Calu3 (cell line): ENCODE measurements at regions of chr12 and their contacts with region 1.

Region 1: DNA sequence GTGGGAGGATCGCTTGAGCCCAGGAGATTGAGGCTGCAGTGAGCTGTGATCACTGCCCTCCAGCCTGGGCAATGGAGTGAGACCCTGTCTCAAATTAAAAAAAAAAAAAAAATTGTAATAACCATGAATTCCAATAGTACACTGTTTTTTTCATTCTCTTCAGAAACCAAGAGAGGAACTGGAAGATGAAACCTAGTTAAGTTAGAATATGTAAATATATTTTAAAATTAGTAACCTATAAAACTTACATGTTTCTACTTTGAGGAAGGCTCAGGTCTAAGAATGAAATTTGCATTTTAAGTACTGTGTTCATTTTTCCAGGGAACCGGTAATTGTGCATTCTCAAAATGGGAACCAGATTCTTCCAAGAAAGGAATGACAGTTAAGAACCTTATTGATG is 18.8 kb downstream of the KNTC1 start:
- DNase-seq: no peak
- H3K4me3 Mint-ChIP-seq: no peak overlapping the region
- H3K27ac Mint-ChIP-seq: no peak overlapping the region
- H3K4me1 Mint-ChIP-seq: no peaks in the 10 kb centered on the region
- H3K27me3 Mint-ChIP-seq: no peaks in the 10 kb centered on the region
- CTCF ChIP-seq: no peak

Region 2: DNA sequence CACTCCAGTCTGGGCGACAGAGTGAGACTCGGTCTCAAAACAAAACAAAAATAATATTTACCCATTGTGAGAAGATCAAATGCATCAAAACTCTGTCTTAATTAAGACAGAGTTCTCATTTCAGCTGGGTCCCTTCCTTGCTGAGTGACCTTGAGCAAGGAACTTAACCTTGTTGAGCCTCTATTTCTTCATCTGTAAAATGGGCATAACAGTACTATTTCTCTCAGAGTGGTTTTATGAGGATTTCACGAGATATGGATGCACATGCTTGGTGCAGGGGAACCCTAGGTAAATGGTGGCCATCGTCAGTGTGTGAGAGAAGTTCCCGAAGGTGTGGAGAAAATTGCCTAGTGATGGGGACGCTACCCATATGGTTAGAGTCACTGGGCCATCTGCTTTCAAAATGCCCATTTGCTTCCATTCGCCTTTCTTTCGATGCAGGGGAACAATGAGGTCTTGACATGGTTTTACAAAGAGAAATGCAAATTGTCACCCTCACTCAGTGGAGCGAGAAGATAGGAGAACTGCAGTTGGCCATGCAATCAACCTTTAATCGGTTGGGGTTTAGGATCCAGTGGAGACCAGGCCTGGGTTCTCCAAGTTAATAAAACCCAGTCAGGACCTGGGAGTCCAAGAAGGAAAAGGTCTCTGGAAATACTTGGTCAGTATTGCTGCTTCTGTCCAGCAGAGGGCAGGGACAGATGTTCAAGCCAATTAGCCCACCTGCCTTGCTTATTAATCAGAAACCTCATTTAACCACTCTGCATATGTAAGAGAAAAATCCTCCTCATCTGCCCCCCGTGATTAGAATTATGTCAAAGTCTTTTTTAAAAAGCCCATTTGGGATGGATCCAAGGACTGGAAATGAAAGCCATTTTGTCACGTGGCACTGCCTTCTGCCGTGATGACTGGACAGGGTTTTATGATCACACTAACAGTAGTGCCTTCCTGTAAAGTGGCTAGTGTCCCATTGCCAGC is 590.3 kb before region 1 on chr12:
- CTCF ChIA-PET with region 1: no interaction called
- intact Hi-C with region 1: no loop called
- DNase-seq: peak; percentile 18
- H3K4me3 Mint-ChIP-seq: no peak overlapping the region
- H3K27ac Mint-ChIP-seq: no peak overlapping the region
- H3K4me1 Mint-ChIP-seq: no peaks in the 10 kb centered on the region
- H3K27me3 Mint-ChIP-seq: no peaks in the 10 kb centered on the region
- CTCF ChIP-seq: peak; percentile 74

Region 3: GRCh38 chr12:122437656-122438121 is 108.2 kb before region 1 on chr12:
- CTCF ChIA-PET with region 1: interaction called, 12 read pairs
- intact Hi-C with region 1: no loop called
- DNase-seq: no peak
- H3K4me3 Mint-ChIP-seq: no peak overlapping the region
- H3K27ac Mint-ChIP-seq: no peak overlapping the region
- H3K4me1 Mint-ChIP-seq: peaks cover 10% of the 10 kb centered on the region
- H3K27me3 Mint-ChIP-seq: no peaks in the 10 kb centered on the region
- CTCF ChIP-seq: no peak

Region 4: DNA sequence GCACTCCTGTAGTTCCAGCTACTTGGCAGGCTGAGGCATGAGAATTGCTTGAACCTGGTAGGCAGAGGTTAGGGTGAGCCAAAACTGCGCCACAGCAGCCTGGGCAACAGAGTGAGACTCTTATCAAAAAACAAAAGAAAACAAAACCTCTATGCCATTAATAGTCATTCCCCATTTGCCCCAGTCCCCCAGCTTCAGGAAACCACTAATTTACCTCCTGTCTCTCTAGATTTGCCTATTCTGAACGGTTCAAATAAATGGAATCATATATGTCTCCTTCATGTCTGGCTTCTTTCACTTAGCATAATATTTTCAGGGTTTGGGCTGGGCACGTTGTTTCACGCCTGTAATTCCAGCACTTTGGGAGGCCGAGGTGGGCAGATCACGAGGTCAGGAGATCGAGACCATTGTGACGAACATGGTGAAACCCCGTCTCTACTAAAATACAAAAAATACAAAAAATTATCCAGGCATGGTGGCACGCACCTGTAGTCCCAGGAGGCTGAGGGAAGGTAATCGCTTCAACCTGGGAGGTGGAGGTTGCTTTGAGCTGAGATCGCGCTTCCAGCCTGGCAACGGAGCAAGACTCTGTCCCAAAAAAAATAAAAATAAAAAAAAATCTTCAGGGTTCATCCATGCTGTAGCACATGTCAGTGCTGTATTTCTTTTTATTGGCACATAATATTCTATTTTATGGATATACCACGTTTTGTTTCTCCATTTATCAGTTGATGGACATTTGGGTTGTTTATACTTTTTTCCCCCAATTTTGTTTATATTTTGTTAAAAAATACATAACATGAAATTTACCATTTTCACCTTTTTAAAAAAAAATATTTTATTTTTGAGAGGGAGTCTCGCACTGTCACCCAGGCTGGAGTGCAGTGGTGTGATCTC is 13.1 kb after region 1 on chr12:
- CTCF ChIA-PET with region 1: interaction called, 9 read pairs
- intact Hi-C with region 1: loop called (anchors 2 kb)
- DNase-seq: no peak
- H3K4me3 Mint-ChIP-seq: no peak overlapping the region
- H3K27ac Mint-ChIP-seq: no peak overlapping the region
- H3K4me1 Mint-ChIP-seq: no peaks in the 10 kb centered on the region
- H3K27me3 Mint-ChIP-seq: no peaks in the 10 kb centered on the region
- CTCF ChIP-seq: no peak